ENCODE measurements at regions of chr7 and their contacts with region 1.

Region 1: GRCh38 chr7:128322040-128322643 is 21.6 kb downstream of the RBM28 start:
- DNase-seq: peak; percentile 54
- ATAC-seq: peak; percentile 79
- H3K4me3 ChIP-seq: no peak overlapping the region
- H3K27ac ChIP-seq: no peak overlapping the region
- H3K4me1 ChIP-seq: no peaks in the 10 kb centered on the region; the same call in 1 of the 2 replicates
- H3K27me3 ChIP-seq: no peaks in the 10 kb centered on the region
- CTCF ChIP-seq: peak; percentile 56
- POLR2A ChIP-seq: no peak
- RAD21 ChIP-seq: peak; percentile 52

Region 2: GRCh38 chr7:128135515-128136214 is 186.5 kb before region 1 on chr7:
- CTCF ChIA-PET with region 1: interaction called, 5 read pairs
- POLR2A ChIA-PET with region 1: no interaction called
- dilution Hi-C with region 1: no loop called
- in situ Hi-C with region 1: no loop called
- intact Hi-C with region 1: loop called (anchors 1 kb)
- DNase-seq: peak; percentile 37
- ATAC-seq: peak; percentile 97
- H3K4me3 ChIP-seq: peak overlapping the region; percentile 61
- H3K27ac ChIP-seq: no peak overlapping the region; the same call in 1 of the 2 replicates
- H3K4me1 ChIP-seq: peaks cover 2% of the 10 kb centered on the region; the same call in 1 of the 2 replicates
- H3K27me3 ChIP-seq: peaks cover 52% of the 10 kb centered on the region
- CTCF ChIP-seq: peak; percentile 80
- POLR2A ChIP-seq: no peak
- RAD21 ChIP-seq: peak; percentile 68

Region 3: GRCh38 chr7:128215739-128216138 is 106.4 kb before region 1 on chr7:
- CTCF ChIA-PET with region 1: no interaction called
- POLR2A ChIA-PET with region 1: no interaction called
- dilution Hi-C with region 1: no loop called
- in situ Hi-C with region 1: no loop called
- intact Hi-C with region 1: loop called (anchors 1 kb)
- DNase-seq: peak; percentile 18
- ATAC-seq: peak; percentile 54
- H3K4me3 ChIP-seq: no peak overlapping the region
- H3K27ac ChIP-seq: peak overlapping the region; percentile 45; the same call in 1 of the 2 replicates
- H3K4me1 ChIP-seq: peaks cover 5% of the 10 kb centered on the region
- H3K27me3 ChIP-seq: peaks cover 30% of the 10 kb centered on the region
- CTCF ChIP-seq: no peak
- POLR2A ChIP-seq: no peak
- RAD21 ChIP-seq: no peak

Region 4: GRCh38 chr7:129089521-129090212 is 767.5 kb after region 1 on chr7:
- CTCF ChIA-PET with region 1: no interaction called
- POLR2A ChIA-PET with region 1: no interaction called
- dilution Hi-C with region 1: no loop called
- in situ Hi-C with region 1: no loop called
- intact Hi-C with region 1: no loop called
- DNase-seq: no peak
- ATAC-seq: no peak
- H3K4me3 ChIP-seq: no peak overlapping the region
- H3K27ac ChIP-seq: no peak overlapping the region
- H3K4me1 ChIP-seq: no peaks in the 10 kb centered on the region; the same call in 1 of the 2 replicates
- H3K27me3 ChIP-seq: peaks cover 7% of the 10 kb centered on the region
- CTCF ChIP-seq: no peak
- POLR2A ChIP-seq: no peak
- RAD21 ChIP-seq: no peak